Activated CD4-positive, alpha-beta memory T cell treated with anti-CD3 and anti-CD28 coated beads, Interleukin-2, amount 10 ng/mL, durations not matched to agents 7 days and 5 days (primary cell): ENCODE measurements at regions of chr9 and their contacts with region 1.

Region 1: DNA sequence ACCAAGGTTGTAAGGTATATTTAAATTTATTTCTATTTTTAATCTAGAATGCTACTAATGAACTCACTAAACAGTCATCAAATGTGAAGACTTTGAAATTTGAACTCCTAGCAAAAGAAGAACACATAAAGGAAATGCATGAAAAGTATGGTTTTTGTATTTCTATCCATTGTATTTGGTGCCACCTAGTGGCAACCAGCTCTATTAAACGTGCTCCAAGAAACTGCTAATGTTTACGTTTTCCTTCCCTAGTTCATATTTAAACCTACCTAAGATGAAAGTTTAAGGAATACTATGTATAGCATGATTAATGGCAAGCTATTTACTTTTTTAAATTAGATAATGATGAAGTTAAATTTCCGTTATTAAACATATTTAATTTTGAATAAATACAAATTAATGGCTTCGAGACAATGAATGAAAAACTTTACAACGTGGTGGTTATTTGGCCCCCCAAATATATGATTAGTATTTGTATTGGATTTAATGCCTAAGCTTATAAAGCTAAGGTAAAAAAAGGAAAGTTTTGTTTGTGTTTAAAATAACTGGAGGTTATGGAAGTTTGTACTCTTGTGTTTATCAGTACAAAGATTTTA is 115.9 kb upstream of the SH3GL2 start:
- DNase-seq: no peak
- H3K4me3 Mint-ChIP-seq: no peak overlapping the region
- H3K27ac Mint-ChIP-seq: no peak overlapping the region
- H3K4me1 Mint-ChIP-seq: no peaks in the 10 kb centered on the region
- H3K27me3 Mint-ChIP-seq: no peaks in the 10 kb centered on the region

Region 2: GRCh38 chr9:17063535-17064135 is 399.3 kb before region 1 on chr9:
- CTCF ChIA-PET with region 1: interaction called, 15 read pairs
- POLR2A ChIA-PET with region 1: no interaction called
- DNase-seq: no peak
- H3K4me3 Mint-ChIP-seq: no peak overlapping the region
- H3K27ac Mint-ChIP-seq: no peak overlapping the region
- H3K4me1 Mint-ChIP-seq: no peaks in the 10 kb centered on the region
- H3K27me3 Mint-ChIP-seq: no peaks in the 10 kb centered on the region

Region 3: DNA sequence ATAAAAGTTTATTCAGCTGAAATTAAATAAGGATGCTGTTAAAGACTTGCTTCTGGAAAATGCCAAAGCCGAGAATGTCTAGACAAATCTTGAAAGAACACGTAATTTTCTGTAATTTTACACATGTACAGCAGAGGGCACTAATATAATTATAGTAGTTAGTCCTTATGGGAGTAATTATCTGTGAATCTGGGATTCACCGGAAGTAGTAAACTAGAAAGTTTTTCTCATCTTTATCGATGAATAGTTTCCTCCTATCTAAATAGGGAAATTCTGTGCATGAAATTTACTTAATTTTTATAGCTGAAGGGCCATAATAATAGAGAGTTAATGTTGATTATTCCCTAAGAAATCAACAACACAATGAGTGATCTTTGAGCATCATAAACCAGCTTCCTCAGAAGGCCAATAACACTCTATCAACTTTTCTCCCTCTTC is 346.5 kb before region 1 on chr9:
- CTCF ChIA-PET with region 1: interaction called, 11 read pairs
- POLR2A ChIA-PET with region 1: no interaction called
- DNase-seq: no peak
- H3K4me3 Mint-ChIP-seq: no peak overlapping the region
- H3K27ac Mint-ChIP-seq: no peak overlapping the region
- H3K4me1 Mint-ChIP-seq: no peaks in the 10 kb centered on the region
- H3K27me3 Mint-ChIP-seq: no peaks in the 10 kb centered on the region